K562 (cell line): ENCODE measurements at regions of chrX and their contacts with region 1.

Region 1: DNA sequence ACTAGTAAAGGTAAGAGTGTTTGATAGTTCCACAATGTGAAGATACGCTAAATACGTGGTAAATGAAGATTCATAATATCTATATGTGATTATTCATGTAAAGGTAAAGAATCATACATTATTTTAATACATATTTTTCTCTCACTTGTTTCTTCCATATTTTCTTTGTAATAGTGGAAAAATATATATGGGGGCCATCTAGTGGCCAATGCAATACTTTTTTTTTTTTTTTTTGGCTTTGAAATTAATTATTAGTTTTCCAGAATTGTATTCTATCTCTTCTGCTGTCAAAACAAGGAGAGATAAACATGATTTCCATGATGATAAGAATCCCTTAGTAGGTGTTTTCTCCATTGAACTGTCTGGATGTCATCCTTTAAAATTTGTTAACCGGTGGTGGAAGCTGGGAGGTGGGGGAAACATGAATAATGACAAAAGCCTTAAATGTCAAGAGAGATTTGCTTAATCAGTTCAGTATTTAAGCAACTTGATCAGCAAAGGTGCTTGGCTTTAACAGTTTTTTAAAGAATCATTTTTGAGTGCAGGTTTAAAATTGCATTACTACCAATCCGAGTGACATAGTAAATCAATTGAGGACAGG is 508.7 kb upstream of the HTR2C start:
- DNase-seq: no peak
- ATAC-seq: no peak
- H3K4me3 ChIP-seq: no peak overlapping the region
- H3K27ac ChIP-seq: no peak overlapping the region
- H3K4me1 ChIP-seq: peaks cover 0 to 15% of the 10 kb centered on the region in 2 experiments; a peak in 3 of 5 replicates
- H3K27me3 ChIP-seq: no peaks in the 10 kb centered on the region
- CTCF ChIP-seq: peak; percentile 15 to 57 (median 16); a peak in 3 of 6 replicates
- EP300 ChIP-seq: no peak
- POLR2A ChIP-seq: no peak
- RAD21 ChIP-seq: peak; percentile 31 to 56

Region 2: DNA sequence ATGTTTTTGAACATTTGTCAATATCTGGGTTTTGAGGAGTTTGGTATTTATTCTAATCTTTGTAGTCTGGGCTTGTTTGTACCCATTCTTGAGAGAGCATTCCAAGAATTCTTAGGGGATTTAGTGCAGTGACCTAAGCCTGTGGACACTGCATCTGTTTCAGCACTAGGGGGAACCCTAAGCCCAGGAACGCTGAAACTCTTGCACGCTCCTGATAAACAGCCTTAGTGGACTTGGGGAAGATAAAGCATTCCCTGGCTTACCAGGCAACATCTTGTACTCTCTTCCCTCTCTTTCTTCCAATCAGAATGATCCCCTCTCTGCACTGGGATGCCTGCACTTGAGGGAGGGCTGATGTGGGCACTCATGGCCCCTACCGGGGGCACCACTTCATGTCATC is 146.2 kb before region 1 on chrX:
- CTCF ChIA-PET with region 1: no interaction called
- POLR2A ChIA-PET with region 1: no interaction called
- in situ Hi-C with region 1: no loop called
- intact Hi-C with region 1: loop called (anchors 2 kb)
- DNase-seq: peak; percentile 7 to 57 (median 21)
- ATAC-seq: peak; percentile 86
- H3K4me3 ChIP-seq: no peak overlapping the region
- H3K27ac ChIP-seq: no peak overlapping the region
- H3K4me1 ChIP-seq: no peaks in the 10 kb centered on the region
- H3K27me3 ChIP-seq: no peaks in the 10 kb centered on the region
- CTCF ChIP-seq: peak; percentile 55 to 60 (median 57)
- EP300 ChIP-seq: no peak
- POLR2A ChIP-seq: no peak
- RAD21 ChIP-seq: peak; percentile 22 to 76; a peak in 3 of 4 replicates

Region 3: DNA sequence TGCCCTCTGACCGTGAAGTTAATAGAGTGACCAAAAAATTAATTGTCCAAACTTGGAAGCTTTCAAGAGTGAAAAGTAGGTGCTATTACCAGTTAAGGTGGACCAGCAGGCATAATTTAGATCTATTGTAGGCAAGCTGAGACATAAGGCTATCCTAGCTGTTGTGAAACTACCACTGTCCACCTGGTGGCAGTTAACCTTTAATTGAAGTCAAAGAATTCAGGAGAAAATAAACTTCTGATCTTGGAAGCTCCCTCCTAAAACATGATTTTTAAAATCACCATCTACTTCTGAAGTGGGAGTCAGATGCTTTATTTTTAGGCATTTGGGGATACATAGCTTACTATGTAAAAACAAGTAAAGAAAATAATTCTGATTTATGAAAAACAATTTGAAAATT is 127.6 kb before region 1 on chrX:
- CTCF ChIA-PET with region 1: no interaction called
- POLR2A ChIA-PET with region 1: no interaction called
- in situ Hi-C with region 1: no loop called
- intact Hi-C with region 1: loop called (anchors 5 kb)
- DNase-seq: peak; percentile 11 to 15 (median 12)
- ATAC-seq: peak; percentile 63; the same call in 2 of the 3 replicates
- H3K4me3 ChIP-seq: no peak overlapping the region
- H3K27ac ChIP-seq: no peak overlapping the region
- H3K4me1 ChIP-seq: no peaks in the 10 kb centered on the region
- H3K27me3 ChIP-seq: no peaks in the 10 kb centered on the region
- CTCF ChIP-seq: 0 out of 6 replicates have a peak, but pooled peaks of 1 of the 3 experiments have one; percentile 13
- EP300 ChIP-seq: no peak
- POLR2A ChIP-seq: no peak
- RAD21 ChIP-seq: peak in 1 of 2 experiments; percentile 35; a peak in 1 of 4 replicates

Region 4: DNA sequence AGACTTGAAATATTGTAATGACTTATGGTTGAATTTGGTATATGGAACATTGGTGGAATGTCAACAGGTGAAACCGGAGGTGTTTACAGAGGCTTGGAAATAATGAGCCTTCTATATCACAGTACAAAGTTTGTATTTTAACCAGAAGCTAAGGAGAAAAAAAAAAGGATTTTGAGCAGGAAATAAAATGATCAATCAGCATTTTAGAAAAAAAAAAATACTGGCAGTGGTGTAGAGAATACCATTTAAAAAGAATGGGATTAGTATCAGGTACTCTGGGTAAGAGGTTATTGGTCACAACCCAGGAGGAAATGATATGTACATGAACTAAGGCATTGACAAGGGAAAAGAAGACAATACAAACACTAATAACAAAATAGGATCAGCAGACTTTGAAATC is 78.4 kb before region 1 on chrX:
- CTCF ChIA-PET with region 1: no interaction called
- POLR2A ChIA-PET with region 1: no interaction called
- in situ Hi-C with region 1: no loop called
- intact Hi-C with region 1: loop called (anchors 10 kb)
- DNase-seq: no peak
- ATAC-seq: no peak
- H3K4me3 ChIP-seq: no peak overlapping the region
- H3K27ac ChIP-seq: no peak overlapping the region
- H3K4me1 ChIP-seq: peaks cover 0 to 3% of the 10 kb centered on the region in 2 experiments; a peak in 2 of 5 replicates
- H3K27me3 ChIP-seq: no peaks in the 10 kb centered on the region
- CTCF ChIP-seq: no peak
- EP300 ChIP-seq: no peak
- POLR2A ChIP-seq: no peak
- RAD21 ChIP-seq: no peak

Region 5: GRCh38 chrX:114038358-114038757 is 36.8 kb before region 1 on chrX:
- CTCF ChIA-PET with region 1: no interaction called
- POLR2A ChIA-PET with region 1: no interaction called
- in situ Hi-C with region 1: no loop called
- intact Hi-C with region 1: loop called (anchors 1 kb)
- DNase-seq: peak in 2 of 4 experiments; percentile 11 to 54
- ATAC-seq: peak; percentile 53
- H3K4me3 ChIP-seq: no peak overlapping the region
- H3K27ac ChIP-seq: no peak overlapping the region; the same call in 2 of the 3 replicates
- H3K4me1 ChIP-seq: peaks cover 3 to 18% of the 10 kb centered on the region in 2 experiments; a peak in 4 of 5 replicates
- H3K27me3 ChIP-seq: no peaks in the 10 kb centered on the region
- CTCF ChIP-seq: no peak
- EP300 ChIP-seq: peak; percentile 34; the same call in 1 of the 2 replicates
- POLR2A ChIP-seq: no peak
- RAD21 ChIP-seq: no peak

Region 6: GRCh38 chrX:114058988-114059418 is 16.2 kb before region 1 on chrX:
- CTCF ChIA-PET with region 1: no interaction called
- POLR2A ChIA-PET with region 1: interaction called, 9 read pairs
- in situ Hi-C with region 1: no loop called
- intact Hi-C with region 1: loop called (anchors 2 kb)
- DNase-seq: peak in 2 of 4 experiments; percentile 35 to 79
- ATAC-seq: peak; percentile 71
- H3K4me3 ChIP-seq: peak overlapping the region; percentile 47
- H3K27ac ChIP-seq: peak overlapping the region; percentile 86
- H3K4me1 ChIP-seq: peaks cover 4% of the 10 kb centered on the region in 2 experiments; a peak in 3 of 5 replicates
- H3K27me3 ChIP-seq: no peaks in the 10 kb centered on the region
- CTCF ChIP-seq: no peak
- EP300 ChIP-seq: peak; percentile 92
- POLR2A ChIP-seq: peak; percentile 47; the same call in 1 of the 2 replicates
- RAD21 ChIP-seq: no peak

Region 7: DNA sequence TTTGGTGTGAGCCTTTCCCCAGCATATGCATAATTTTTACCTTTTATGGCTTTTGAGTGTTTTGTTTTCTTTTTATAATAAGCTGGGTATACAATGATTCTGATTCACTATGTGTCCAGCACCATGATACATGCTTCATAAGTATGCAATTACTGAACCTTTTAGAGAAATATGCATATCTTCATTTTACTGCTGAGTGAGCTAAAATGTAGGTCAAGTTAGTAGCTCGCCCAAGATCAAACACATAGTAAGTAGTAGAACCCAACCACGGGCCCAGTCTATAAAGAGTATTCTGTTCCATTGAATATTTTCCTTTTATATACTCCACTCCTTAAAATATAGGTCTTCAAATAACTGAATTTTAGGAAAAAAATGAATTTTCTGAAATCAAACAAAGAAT is 146.3 kb after region 1 on chrX:
- CTCF ChIA-PET with region 1: no interaction called
- POLR2A ChIA-PET with region 1: no interaction called
- in situ Hi-C with region 1: no loop called
- intact Hi-C with region 1: no loop called
- DNase-seq: no peak
- ATAC-seq: no peak
- H3K4me3 ChIP-seq: no peak overlapping the region
- H3K27ac ChIP-seq: no peak overlapping the region
- H3K4me1 ChIP-seq: no peaks in the 10 kb centered on the region
- H3K27me3 ChIP-seq: no peaks in the 10 kb centered on the region
- CTCF ChIP-seq: no peak
- EP300 ChIP-seq: no peak
- POLR2A ChIP-seq: no peak
- RAD21 ChIP-seq: no peak